ENCODE measurements at regions of chr7 and their contacts with region 1.

Region 1: DNA sequence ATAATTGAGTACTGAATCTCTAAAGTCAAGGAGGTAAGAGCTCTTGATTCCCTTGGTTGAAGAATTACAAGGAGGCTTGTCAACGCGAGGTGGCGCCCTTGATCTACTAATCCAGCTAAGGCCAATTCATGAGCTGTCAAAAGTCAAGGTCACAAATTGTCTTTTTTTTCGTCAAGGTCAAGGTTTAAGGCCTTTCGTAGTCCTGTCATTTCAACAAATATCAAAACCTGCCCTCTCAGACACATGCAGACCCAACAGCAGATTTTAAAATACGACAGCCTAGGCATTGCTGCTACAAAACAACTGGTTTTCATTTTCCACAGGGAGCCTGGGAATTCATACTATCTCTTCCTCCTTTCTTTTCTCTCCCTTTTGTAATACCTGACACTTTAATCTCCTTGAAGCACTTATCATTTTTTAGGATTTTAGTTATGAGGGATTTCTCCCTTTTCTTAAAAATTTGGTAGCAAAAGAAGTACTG is 3.6 kb downstream of the HOXA13 start:
- DNase-seq: peak; percentile 74
- H3K4me3 Mint-ChIP-seq: no peak overlapping the region
- H3K27ac Mint-ChIP-seq: no peak overlapping the region
- H3K4me1 Mint-ChIP-seq: no peaks in the 10 kb centered on the region
- H3K27me3 Mint-ChIP-seq: peaks cover 55% of the 10 kb centered on the region
- CTCF ChIP-seq: peak; percentile 83

Region 2: DNA sequence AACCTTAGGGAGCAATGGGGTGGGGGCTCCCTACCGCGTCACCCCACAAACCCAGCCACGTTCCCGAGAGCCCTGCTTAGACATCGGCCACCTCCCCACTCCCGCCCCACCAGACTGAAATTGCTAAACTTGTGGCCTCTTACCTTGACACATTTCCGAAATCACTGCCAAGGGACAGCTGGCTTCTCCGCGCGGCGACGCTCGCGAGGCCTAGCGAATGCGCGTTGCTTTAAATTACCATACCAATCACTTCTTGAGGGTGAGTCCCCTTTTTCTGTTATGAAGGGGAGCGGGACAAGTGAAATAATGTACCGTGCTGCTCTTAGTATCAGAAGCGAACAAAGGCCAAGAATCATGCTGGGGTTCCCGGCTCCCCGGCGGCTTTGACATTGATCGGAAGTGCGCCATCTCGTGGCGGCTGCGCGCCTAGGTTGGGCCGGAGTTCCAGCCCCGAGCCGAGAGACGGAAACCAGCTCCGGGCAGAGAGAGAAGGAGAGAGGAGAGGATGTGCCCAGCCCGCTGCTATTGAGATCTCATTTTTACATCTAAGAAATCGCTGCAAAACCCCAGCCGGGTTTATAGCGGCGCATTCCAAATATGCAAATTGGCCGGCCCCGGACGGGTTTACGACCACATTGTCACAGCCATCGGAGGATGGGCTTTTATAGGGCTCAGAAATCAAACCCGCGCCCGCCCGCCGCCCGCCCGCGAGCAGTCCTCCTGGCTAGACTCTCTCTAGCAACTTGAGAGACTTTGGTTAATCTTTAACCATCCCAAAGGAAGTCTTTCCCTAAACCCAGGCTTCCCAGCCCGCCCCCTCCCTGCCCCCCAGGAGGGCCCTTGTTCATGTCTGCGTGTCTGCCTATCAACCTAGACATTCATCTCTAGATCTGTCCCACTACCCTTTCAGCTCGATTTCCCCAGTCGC is 16.6 kb before region 1 on chr7:
- CTCF ChIA-PET with region 1: interaction called, 10 read pairs
- POLR2A ChIA-PET with region 1: no interaction called
- intact Hi-C with region 1: no loop called
- DNase-seq: peak; percentile 69
- H3K4me3 Mint-ChIP-seq: no peak overlapping the region
- H3K27ac Mint-ChIP-seq: no peak overlapping the region
- H3K4me1 Mint-ChIP-seq: peaks cover 2% of the 10 kb centered on the region
- H3K27me3 Mint-ChIP-seq: no peaks in the 10 kb centered on the region
- CTCF ChIP-seq: peak; percentile 84

Region 3: DNA sequence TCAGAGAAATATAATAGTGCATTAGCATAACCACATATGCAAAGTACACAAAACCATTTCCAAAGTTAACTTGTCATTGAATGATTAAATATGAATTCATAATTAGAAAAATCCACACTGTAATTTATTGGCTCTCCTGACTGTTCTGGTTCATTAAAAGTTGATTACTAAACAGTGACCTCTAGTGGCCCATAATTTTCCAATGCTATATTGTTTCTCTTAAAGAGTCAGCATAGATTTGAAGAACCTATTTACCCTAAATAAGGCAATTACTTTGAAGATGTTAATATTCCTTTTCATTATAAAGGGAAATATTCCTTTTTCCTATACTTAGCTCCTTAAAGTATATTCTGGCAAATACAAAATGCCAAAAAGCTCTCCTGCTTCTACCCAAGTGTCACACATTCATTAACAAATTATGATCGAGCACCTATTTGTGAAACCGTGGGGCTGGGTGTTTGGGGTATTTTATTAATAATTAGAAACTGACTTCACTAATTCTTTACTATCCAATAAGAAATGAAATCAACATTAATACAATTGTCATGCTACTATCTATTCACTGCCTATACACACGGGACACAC is 380.1 kb after region 1 on chr7:
- CTCF ChIA-PET with region 1: interaction called, 12 read pairs
- POLR2A ChIA-PET with region 1: interaction called, 3 read pairs
- intact Hi-C with region 1: loop called (anchors 1 kb)
- DNase-seq: peak; percentile 63
- H3K4me3 Mint-ChIP-seq: no peak overlapping the region
- H3K27ac Mint-ChIP-seq: no peak overlapping the region
- H3K4me1 Mint-ChIP-seq: peaks cover 5% of the 10 kb centered on the region
- H3K27me3 Mint-ChIP-seq: no peaks in the 10 kb centered on the region
- CTCF ChIP-seq: peak; percentile 44

Region 4: GRCh38 chr7:27774717-27775328 is 578.5 kb after region 1 on chr7:
- CTCF ChIA-PET with region 1: interaction called, 25 read pairs
- POLR2A ChIA-PET with region 1: interaction called, 4 read pairs
- intact Hi-C with region 1: loop called (anchors 1 kb)
- DNase-seq: peak; percentile 48
- H3K4me3 Mint-ChIP-seq: no peak overlapping the region
- H3K27ac Mint-ChIP-seq: no peak overlapping the region
- H3K4me1 Mint-ChIP-seq: peaks cover 10% of the 10 kb centered on the region
- H3K27me3 Mint-ChIP-seq: no peaks in the 10 kb centered on the region
- CTCF ChIP-seq: peak; percentile 71

Region 5: DNA sequence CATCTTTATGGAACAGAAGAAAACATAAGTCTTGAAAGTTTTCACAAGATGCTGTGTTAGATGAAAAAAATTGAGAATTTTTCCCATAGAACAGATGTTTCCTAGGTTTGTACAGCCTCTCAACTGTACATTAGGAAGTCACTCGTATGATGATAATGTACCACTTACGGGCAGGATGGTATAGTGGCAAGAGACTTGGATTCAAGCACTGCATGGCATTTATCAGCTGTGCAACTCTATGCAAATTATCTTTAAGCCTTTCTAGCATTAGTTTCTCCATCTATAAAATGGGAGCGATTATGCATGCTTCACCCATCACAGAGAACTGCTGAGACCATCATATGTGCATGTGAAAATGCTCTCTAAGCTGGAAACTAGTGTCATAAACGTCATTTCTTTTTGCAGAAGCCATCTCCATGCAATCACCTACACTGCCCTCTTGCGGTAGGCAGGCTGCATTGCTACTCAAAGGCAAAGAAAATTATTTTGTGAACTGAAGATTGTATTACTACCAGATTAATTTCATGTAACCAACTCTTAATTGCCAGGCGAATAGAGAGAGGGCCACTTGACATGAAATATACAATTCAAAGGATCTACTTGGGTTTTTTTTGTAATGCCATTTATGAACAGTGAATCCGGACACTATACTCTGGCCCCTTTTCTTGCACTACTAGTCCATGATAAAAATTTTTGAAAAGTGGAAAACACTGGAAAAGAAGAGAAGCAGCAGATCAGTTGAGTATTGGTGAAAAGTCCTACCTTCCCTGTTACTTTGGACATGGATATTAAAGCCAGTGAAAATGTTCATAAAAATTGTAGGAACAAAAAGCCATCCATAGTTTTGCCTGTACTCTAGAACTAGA is 881.9 kb after region 1 on chr7:
- CTCF ChIA-PET with region 1: interaction called, 6 read pairs
- POLR2A ChIA-PET with region 1: no interaction called
- intact Hi-C with region 1: loop called (anchors 5 kb)
- DNase-seq: peak; percentile 55
- H3K4me3 Mint-ChIP-seq: no peak overlapping the region
- H3K27ac Mint-ChIP-seq: no peak overlapping the region
- H3K4me1 Mint-ChIP-seq: peaks cover 22% of the 10 kb centered on the region
- H3K27me3 Mint-ChIP-seq: no peaks in the 10 kb centered on the region
- CTCF ChIP-seq: peak; percentile 87

Measured in MCF 10A (cell line).